Activated T-helper 2 cell treated with anti-CD3 and anti-CD28 coated beads, Interferon-gamma antibody, Interleukin-2, Interleukin-4, amounts not matched to agents 10 μg/mL and 5 μg/mL and 100 μg/mL, durations not matched to agents 14 hours and 24 hours and 36 hours (primary cell): ENCODE measurements at regions of chr22 and their contacts with region 1.

Region 1: GRCh38 chr22:45863981-45864751 is 112.8 kb downstream of the WNT7B start:
- DNase-seq: peak; percentile 48
- H3K4me3 Mint-ChIP-seq: no peak overlapping the region
- H3K27ac Mint-ChIP-seq: no peak overlapping the region
- H3K4me1 Mint-ChIP-seq: peaks cover 1% of the 10 kb centered on the region
- H3K27me3 Mint-ChIP-seq: peaks cover 43% of the 10 kb centered on the region

Region 2: DNA sequence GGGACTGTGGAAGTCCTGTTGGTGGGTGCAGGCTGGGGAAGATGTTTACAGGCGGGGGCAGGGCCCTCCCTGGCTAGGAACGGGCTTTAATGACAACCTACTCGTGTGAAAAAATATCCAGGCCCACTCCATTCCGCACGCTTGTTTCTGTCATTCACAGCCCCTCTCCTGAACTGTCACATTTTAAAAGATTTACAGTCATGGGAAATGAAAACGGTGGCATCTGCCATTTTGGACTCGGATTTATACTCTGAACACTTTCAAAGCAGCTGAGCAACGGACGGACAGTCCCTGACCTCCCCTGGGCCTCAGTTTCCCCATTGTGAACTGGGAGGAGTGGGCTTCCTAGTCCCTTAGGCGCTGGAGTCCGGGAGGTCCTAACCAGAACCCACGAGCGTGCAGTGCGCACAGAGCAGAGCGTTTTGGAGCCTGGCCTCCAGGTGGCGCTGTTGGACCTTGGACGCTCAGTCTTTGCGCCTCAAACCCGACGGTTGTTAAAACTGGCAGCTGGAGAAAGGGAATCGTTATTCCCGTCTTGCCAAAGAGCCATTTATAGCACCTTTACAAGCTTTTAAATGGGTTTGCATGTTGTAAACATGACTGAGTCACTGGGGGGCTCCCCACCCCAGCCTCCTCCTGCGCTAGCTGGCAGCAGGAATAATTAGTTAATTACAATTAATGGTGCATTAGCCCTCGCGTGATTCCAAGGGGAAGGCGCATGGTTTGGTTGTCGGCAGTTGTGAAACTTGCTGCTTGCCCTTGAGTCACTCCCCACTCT is 286.2 kb before region 1 on chr22:
- intact Hi-C with region 1: loop called (anchors 10 kb)
- DNase-seq: peak; percentile 54
- H3K4me3 Mint-ChIP-seq: no peak overlapping the region
- H3K27ac Mint-ChIP-seq: no peak overlapping the region
- H3K4me1 Mint-ChIP-seq: no peaks in the 10 kb centered on the region
- H3K27me3 Mint-ChIP-seq: no peaks in the 10 kb centered on the region